ENCODE measurements at regions of chr17 and their contacts with region 1.

Region 1: GRCh38 chr17:44218344-44219107 is 949 bp downstream of the UBTF start:
- DNase-seq: peak; percentile 94
- ATAC-seq: peak; percentile 46
- H3K4me3 Mint-ChIP-seq: peak overlapping the region; percentile 99
- H3K27ac Mint-ChIP-seq: peak overlapping the region; percentile 94
- H3K4me1 Mint-ChIP-seq: peaks cover 45% of the 10 kb centered on the region
- H3K27me3 Mint-ChIP-seq: no peaks in the 10 kb centered on the region

Region 2: DNA sequence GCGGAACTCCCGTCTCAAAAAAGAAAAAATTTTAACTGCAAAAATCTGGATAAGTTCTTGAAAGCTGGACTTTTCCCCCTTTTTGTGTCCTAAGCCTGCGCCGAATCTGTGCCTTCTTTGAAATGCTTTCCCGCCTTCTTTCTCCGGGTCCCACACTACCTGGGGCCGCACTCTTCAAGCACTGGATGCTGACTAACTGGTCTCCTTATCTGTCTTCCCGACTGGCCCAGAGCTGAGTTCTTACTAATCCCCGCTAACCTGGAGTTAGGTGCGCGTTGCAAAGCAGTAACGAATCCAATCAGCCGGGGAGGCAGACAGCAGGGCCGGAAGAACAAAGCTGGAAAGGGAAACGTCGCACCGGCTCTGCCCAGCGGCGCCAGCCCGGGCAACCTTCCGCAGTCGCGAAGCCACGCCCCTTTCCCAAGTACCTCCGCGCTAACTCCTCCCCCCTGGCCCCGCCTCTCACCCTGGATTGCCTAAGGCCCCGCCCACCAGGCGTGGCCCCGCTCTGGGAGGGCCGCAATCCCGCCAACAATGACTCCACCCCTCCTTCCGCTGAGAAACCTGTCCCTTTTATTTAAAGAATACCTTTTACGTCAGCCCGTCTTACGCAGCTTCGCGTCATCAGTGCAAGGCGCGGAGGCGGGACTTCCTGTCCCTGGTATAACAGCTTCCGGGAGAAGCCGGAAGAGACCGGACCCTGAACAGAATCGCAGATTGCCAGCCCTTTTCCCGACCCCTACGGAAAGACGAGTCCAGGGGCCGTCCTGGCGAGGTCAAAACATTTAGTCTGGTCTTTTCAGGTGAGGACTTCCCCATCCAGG is 32.0 kb before region 1 on chr17 and contains the start of gene TMUB2:
- POLR2A ChIA-PET with region 1: interaction called, 22 read pairs
- DNase-seq: peak; percentile 99
- ATAC-seq: peak; percentile 86
- H3K4me3 Mint-ChIP-seq: peak within 1 kb of the TSS; percentile 99
- H3K27ac Mint-ChIP-seq: peak within 1 kb of the TSS; percentile 99
- H3K4me1 Mint-ChIP-seq: peaks cover 31% of the 10 kb centered on the region
- H3K27me3 Mint-ChIP-seq: no peaks in the 10 kb centered on the region
- total RNA-seq, gene TMUB2: 38.3 to 42.5 TPM

Region 3: GRCh38 chr17:44199553-44200477 is 18.7 kb before region 1 on chr17 and contains the start of gene ATXN7L3:
- POLR2A ChIA-PET with region 1: interaction called, 22 read pairs
- DNase-seq: peak; percentile 98
- ATAC-seq: peak; percentile 71
- H3K4me3 Mint-ChIP-seq: peak within 1 kb of the TSS; percentile 95
- H3K27ac Mint-ChIP-seq: peak within 1 kb of the TSS; percentile 97
- H3K4me1 Mint-ChIP-seq: peaks cover 45% of the 10 kb centered on the region
- H3K27me3 Mint-ChIP-seq: no peaks in the 10 kb centered on the region
- total RNA-seq, gene ATXN7L3: 116 TPM

Region 4: DNA sequence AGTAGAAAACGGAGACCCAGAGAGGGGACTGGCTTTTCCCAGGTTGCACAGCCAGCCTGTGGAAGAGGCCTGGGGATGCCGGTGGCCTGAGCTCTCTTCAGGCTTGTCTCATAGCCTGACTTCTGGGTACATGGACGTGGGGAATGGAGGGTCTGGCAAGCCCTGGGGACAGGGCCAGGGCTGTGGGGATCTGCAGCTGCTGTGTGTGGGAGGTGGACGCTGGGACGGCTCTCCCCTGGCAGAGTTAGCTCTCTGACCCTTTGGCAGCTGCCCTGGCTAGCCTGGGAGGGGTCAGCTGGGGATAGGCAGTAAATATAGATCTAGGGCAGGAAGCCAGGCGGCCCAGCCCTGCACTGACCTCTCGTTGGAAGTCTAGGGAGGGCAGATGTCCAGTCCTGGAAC is 28.9 kb after region 1 on chr17:
- POLR2A ChIA-PET with region 1: interaction called, 82 read pairs
- DNase-seq: no peak
- ATAC-seq: no peak
- H3K4me3 Mint-ChIP-seq: peak overlapping the region; percentile 25
- H3K27ac Mint-ChIP-seq: peak overlapping the region; percentile 88
- H3K4me1 Mint-ChIP-seq: peaks cover 37% of the 10 kb centered on the region
- H3K27me3 Mint-ChIP-seq: peaks cover 2% of the 10 kb centered on the region

Region 5: DNA sequence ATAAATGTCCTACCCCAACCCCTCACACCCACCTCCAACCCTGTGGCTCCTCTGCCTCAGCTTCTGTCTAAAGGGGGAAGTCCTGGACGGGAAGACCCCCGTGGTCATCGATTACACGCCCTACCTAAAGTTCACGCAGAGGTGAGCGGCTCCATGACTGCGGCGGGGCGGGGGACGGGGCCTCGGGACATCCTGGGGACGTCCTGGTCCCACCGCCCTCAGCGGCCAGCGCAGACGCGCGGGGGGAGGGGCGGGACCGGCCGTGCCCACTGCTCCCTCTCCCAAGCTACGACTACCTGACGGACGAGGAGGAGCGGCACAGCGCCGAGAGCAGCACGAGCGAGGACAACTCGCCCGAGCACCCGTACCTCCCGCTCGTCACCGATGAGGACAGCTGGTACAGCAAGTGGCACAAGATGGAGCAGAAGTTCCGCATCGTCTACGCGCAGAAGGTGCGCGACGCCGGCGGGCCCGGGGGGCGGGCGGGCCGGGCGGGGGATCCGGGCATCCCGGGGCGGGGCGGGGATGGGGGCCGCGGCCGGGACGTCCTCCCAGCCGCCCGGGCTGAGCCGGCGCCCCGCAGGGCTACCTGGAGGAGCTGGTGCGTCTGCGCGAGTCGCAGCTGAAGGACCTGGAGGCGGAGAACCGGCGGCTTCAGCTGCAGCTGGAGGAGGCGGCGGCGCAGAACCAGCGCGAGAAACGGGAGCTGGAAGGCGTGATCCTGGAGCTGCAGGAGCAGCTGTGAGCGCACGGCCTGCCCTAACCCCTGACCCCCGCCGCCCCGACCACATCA is 96.5 kb after region 1 on chr17:
- POLR2A ChIA-PET with region 1: interaction called, 72 read pairs
- DNase-seq: peak; percentile 59
- ATAC-seq: peak; percentile 70
- H3K4me3 Mint-ChIP-seq: peak overlapping the region; percentile 77
- H3K27ac Mint-ChIP-seq: no peak overlapping the region
- H3K4me1 Mint-ChIP-seq: peaks cover 12% of the 10 kb centered on the region
- H3K27me3 Mint-ChIP-seq: peaks cover 37% of the 10 kb centered on the region

Region 6: GRCh38 chr17:44324571-44325275 is 106.2 kb after region 1 on chr17 and contains the start of gene SLC25A39:
- POLR2A ChIA-PET with region 1: interaction called, 72 read pairs
- DNase-seq: peak; percentile 100
- ATAC-seq: peak; percentile 77
- H3K4me3 Mint-ChIP-seq: peak within 1 kb of the TSS; percentile 90
- H3K27ac Mint-ChIP-seq: peak within 1 kb of the TSS; percentile 93
- H3K4me1 Mint-ChIP-seq: peaks cover 20% of the 10 kb centered on the region
- H3K27me3 Mint-ChIP-seq: no peaks in the 10 kb centered on the region
- total RNA-seq, gene SLC25A39: 104 to 117 TPM

Region 7: DNA sequence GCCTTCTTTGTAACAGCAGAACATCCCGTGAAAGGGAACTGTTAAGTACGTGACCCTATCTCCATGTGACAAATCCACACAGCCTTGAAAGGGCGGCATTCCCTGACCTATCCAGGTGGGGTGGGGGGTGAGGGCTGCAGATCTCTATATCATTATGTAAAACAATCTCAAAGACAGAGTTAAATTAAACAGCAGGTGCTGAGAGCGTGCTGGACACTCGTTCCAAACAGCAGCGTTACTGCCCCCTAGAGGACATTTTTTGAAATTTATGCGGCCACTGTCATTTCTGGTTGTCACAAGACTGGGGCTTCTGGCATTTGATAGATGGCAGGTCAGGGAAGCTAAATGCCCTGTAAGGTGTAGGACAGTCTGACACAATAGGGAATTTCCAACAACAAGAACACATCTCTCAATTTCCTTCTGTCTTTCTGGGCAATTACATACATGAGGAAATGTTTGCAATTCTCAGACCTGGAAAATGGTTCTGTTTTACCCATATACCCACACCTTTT is 112.8 kb after region 1 on chr17:
- POLR2A ChIA-PET with region 1: interaction called, 45 read pairs
- DNase-seq: no peak
- ATAC-seq: peak; percentile 27
- H3K4me3 Mint-ChIP-seq: no peak overlapping the region
- H3K27ac Mint-ChIP-seq: no peak overlapping the region
- H3K4me1 Mint-ChIP-seq: peaks cover 13% of the 10 kb centered on the region
- H3K27me3 Mint-ChIP-seq: peaks cover 2% of the 10 kb centered on the region